Left cardiac atrium (tissue), 4 donors: ENCODE measurements at regions of chr5 and their contacts with region 1.

Region 1: DNA sequence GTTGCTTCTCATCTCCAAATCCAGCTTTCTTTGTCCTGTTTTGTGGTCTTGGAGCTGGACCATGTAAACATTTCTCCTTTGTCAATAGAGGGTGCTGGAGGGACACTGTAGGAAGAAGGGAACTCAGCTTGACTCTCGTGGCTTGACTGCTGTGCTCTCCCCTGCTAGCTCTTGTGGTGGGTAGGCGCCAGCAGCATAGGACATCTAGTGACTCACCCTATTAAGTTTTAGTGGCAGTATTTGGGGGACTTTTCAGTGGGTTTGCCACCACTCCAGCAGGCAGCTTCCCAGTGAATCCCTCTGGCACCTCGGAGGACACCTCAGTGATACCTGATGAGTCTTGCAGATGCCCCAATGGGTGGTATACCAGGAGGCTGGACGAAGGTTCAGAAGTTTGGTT is 97.8 kb downstream of the TSSK1B start:
- DNase-seq: peak; percentile 60
- ATAC-seq: peak; percentile 85 to 90

Region 2: GRCh38 chr5:113513384-113514288 is 176.7 kb after region 1 on chr5 and contains the start of gene YTHDC2:
- intact Hi-C with region 1: loop called in 1 of 2 experiments (anchors 5 kb)
- DNase-seq: peak; percentile 92
- ATAC-seq: peak; percentile 99
- total RNA-seq, gene YTHDC2: 12.6 to 20.3 TPM

Region 3: GRCh38 chr5:113600255-113600905 is 263.4 kb after region 1 on chr5:
- intact Hi-C with region 1: loop called in 1 of 2 experiments (anchors 5 kb)
- DNase-seq: no peak
- ATAC-seq: no peak